ENCODE measurements at regions of chr10 and their contacts with region 1.

Region 1: DNA sequence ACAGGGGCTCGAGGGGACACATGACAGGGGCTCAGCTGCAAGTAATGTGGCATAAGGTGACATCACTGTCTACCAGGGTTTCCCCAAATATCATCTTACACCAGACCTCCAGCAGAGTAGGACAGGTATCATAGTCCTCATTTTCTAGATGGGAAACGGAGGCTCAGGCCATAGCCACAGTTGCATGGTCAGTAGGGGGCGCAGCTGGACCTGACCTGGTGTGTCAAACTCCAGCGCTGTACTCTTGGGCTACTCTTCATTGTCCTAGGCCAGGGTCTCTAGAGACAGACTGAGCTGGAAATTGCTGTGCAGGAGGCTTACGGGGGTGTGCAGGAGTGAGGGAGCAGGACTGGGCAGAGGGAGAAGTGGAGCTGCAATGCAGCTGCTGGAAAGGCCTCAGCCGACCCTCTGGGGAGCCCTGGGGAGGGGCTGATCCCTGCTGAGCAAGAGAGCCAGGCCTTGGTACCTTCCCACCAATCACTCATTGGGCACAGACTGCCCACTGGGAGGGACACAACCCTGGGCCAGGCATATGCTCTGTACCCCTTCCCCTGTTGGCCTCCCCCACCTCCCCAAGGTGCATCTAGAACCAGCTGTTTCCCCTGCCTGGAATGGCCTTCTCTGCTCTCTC is 89.9 kb downstream of the CDH23 start:
- DNase-seq: no peak
- H3K4me3 Mint-ChIP-seq: no peak overlapping the region
- H3K27ac Mint-ChIP-seq: no peak overlapping the region
- H3K4me1 Mint-ChIP-seq: no peaks in the 10 kb centered on the region
- H3K27me3 Mint-ChIP-seq: peaks cover 3% of the 10 kb centered on the region

Region 2: GRCh38 chr10:71569775-71570588 is 83.4 kb after region 1 on chr10:
- intact Hi-C with region 1: loop called (anchors 1 kb)
- DNase-seq: peak; percentile 63
- H3K4me3 Mint-ChIP-seq: no peak overlapping the region
- H3K27ac Mint-ChIP-seq: peak overlapping the region; percentile 55
- H3K4me1 Mint-ChIP-seq: no peaks in the 10 kb centered on the region
- H3K27me3 Mint-ChIP-seq: no peaks in the 10 kb centered on the region

Region 3: GRCh38 chr10:71608819-71609768 is 122.5 kb after region 1 on chr10:
- intact Hi-C with region 1: loop called (anchors 1 kb)
- DNase-seq: peak; percentile 35
- H3K4me3 Mint-ChIP-seq: no peak overlapping the region
- H3K27ac Mint-ChIP-seq: no peak overlapping the region
- H3K4me1 Mint-ChIP-seq: peaks cover 5% of the 10 kb centered on the region
- H3K27me3 Mint-ChIP-seq: peaks cover 4% of the 10 kb centered on the region

Region 4: DNA sequence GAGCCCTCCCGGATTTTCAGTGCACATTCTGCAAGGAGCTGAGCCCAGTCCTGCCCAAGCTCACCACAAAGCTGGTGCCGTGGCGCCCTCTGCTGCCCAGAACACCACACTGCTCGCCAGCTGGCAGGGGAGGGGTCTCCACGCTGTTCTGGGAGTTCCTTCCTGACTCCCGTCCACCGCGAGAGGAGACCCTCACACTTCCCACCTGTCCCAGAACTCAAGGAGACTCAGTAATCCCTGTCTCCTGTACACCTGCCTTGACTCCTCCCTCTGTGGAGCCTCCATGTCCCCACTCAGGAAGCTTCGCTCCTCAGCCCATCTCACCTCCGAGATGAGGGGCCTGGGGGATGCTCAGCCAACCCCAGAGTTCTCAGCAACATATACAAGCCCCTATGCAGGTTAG is 221.7 kb after region 1 on chr10:
- intact Hi-C with region 1: loop called (anchors 1 kb)
- DNase-seq: peak; percentile 43
- H3K4me3 Mint-ChIP-seq: no peak overlapping the region
- H3K27ac Mint-ChIP-seq: no peak overlapping the region
- H3K4me1 Mint-ChIP-seq: peaks cover 27% of the 10 kb centered on the region
- H3K27me3 Mint-ChIP-seq: no peaks in the 10 kb centered on the region

Region 5: GRCh38 chr10:71812016-71812912 is 325.7 kb after region 1 on chr10:
- intact Hi-C with region 1: loop called (anchors 5 kb)
- DNase-seq: peak; percentile 54
- H3K4me3 Mint-ChIP-seq: no peak overlapping the region
- H3K27ac Mint-ChIP-seq: no peak overlapping the region
- H3K4me1 Mint-ChIP-seq: no peaks in the 10 kb centered on the region
- H3K27me3 Mint-ChIP-seq: no peaks in the 10 kb centered on the region

Measured in activated T-helper 1 cell treated with anti-CD3 and anti-CD28 coated beads, Interleukin-12 subunit alpha, Interleukin-12 subunit beta, Interleukin-2, Interleukin-4 antibody, amounts not matched to agents 30 ng/mL and 10 ng/mL and 1 ng/mL, durations not matched to agents 14 hours and 24 hours and 36 hours (primary cell).